ENCODE measurements at regions of chr19 and their contacts with region 1.

Region 1: DNA sequence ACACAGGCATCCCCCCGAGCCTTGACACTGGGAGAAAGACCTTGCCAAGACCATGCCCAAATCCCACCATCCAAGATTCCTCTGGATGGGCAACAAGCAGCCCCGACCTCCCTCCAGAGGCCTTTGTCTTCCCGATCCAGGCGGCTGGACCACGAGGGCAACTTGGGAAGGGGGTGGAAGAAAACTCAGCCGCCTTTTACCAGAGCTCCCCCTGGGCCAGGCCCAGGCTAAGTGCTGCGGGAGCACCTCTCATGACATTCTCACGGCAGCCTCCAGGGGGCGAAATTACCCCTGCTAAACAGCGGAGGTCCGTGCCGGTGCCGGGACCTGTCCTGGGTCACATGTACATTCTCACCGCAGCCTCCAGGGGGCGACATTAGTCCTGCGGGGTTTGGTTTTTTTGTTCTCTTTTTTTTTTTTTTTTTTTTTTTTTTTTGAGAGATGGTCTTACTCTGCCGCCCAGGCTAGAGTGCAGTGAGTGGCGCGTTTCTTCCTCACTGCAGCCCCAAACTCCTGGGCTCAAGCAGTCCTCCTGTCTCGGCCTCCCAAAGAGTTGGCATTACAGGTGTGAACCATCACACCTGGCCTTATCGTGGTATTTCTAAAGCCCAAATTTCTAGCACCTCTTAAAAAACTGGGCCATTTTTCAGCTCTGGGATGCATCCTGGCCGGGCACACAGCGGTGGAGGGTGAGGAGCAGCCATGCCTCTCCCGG is 2.1 kb upstream of the RSPH6A start:
- DNase-seq: peak; percentile 99
- CTCF ChIP-seq: peak; percentile 96

Region 2: DNA sequence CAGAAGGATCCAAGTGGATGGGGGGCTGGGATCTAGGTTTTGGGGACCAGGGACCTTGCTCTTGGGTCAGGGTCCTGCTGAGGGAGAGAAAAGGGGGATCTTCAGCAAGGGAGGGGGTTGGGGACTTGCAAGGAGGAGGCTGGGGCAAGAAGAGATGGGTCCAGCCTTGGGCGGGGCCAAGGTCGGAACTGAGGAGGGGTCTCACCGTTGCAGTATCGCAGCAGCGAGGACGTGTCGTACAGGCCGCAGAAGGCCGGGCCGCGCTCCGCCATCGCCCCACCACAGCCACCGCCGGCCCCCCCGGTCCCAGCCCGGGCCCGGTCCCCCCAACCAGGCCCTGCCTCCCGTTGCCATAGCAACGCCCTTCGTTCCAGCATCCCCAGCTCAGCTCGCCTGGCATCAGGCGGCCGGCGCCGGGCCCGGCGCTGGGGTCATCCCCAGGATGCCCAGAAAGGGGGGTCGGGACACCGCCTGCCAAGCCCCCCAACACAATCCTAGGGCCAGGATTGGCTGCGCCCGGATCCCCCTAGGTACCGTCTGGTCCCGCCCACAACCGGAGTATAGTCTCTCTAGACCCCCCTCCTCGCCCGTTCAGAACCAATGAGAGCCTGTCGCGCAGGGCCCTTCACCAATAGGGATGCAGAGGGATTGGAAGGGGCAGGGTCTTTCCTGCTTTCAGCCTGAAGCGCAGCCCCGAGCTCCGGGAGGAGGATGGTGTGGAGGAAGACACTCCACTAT is 171.9 kb before region 1 on chr19:
- CTCF ChIA-PET with region 1: no interaction called
- POLR2A ChIA-PET with region 1: no interaction called
- DNase-seq: peak; percentile 93
- CTCF ChIP-seq: no peak

Region 3: DNA sequence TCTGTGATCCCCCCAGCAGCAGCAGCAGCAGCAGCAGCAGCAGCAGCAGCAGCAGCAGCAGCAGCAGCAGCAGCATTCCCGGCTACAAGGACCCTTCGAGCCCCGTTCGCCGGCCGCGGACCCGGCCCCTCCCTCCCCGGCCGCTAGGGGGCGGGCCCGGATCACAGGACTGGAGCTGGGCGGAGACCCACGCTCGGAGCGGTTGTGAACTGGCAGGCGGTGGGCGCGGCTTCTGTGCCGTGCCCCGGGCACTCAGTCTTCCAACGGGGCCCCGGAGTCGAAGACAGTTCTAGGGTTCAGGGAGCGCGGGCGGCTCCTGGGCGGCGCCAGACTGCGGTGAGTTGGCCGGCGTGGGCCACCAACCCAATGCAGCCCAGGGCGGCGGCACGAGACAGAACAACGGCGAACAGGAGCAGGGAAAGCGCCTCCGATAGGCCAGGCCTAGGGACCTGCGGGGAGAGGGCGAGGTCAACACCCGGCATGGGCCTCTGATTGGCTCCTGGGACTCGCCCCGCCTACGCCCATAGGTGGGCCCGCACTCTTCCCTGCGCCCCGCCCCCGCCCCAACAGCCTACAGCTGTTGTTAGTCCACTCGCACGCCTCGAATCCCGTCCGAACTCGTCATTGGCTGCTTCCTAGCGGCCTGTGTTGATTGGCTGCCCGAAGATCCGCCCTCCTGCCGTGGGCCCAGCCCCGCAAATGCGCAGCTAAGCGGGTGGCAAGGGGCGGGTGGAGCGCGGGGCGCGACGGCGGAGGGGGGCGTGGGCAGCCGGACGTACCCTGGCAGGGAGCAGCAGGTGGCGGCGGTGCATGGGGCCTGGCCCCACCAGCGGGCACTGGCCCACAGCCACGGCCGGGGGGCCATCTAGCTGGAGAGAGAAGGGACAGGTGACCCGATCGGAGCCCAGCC is 46.7 kb before region 1 on chr19:
- CTCF ChIA-PET with region 1: interaction called, 17 read pairs
- POLR2A ChIA-PET with region 1: no interaction called
- DNase-seq: peak; percentile 88
- CTCF ChIP-seq: peak; percentile 94

Region 4: DNA sequence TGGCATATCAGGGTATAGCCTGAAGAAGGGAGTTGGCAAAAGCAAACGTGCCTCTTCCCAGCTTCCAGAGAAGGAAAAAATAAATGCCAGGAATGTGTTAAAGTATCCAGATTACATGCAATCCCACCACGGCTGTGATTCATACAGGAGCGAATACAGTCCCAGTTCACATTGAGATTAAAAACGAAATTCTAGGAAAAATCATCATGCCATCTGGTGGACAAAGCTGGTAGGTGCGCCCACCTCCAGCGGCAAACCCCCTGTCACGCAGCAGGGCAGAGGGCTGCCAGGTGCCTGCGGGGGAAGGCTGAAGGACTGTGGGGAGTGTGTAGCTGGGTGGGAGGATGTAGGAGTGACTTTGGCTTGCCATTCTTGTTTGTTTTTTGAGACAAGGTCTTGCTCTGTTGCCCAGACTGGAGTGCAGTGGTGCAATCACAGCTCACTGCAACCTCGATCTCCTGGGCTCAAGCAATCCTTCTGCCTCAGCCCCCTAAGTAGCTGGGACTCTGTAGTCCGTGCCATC is 18.1 kb before region 1 on chr19:
- CTCF ChIA-PET with region 1: interaction called, 113 read pairs
- POLR2A ChIA-PET with region 1: interaction called, 3 read pairs
- DNase-seq: peak; percentile 81
- CTCF ChIP-seq: peak; percentile 72

Region 5: DNA sequence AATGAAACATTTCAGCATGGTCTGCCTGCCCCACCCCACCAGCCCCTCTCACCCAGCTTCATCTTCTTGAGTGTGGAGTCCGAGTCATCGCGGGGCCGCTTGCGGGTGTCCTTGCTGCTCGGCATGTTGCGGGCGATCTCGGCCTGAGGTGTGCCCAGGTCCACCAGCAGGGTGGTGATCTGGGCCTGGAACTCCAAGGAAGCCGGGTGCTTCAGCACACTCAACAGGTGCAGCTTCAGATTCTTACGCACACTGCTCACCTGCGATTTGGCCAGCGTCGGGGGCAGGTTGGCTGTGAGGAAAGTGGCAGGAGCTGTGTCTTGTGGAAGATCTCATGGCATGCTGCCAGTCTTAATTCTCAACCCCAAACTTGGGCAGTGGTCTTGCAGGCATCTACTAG is 25.0 kb after region 1 on chr19:
- CTCF ChIA-PET with region 1: interaction called, 24 read pairs
- POLR2A ChIA-PET with region 1: no interaction called
- DNase-seq: no peak
- CTCF ChIP-seq: no peak

Region 6: GRCh38 chr19:45862564-45863334 is 45.6 kb after region 1 on chr19 and contains the start of gene SYMPK:
- CTCF ChIA-PET with region 1: interaction called, 16 read pairs
- POLR2A ChIA-PET with region 1: no interaction called
- DNase-seq: peak; percentile 100
- CTCF ChIP-seq: no peak

Region 7: DNA sequence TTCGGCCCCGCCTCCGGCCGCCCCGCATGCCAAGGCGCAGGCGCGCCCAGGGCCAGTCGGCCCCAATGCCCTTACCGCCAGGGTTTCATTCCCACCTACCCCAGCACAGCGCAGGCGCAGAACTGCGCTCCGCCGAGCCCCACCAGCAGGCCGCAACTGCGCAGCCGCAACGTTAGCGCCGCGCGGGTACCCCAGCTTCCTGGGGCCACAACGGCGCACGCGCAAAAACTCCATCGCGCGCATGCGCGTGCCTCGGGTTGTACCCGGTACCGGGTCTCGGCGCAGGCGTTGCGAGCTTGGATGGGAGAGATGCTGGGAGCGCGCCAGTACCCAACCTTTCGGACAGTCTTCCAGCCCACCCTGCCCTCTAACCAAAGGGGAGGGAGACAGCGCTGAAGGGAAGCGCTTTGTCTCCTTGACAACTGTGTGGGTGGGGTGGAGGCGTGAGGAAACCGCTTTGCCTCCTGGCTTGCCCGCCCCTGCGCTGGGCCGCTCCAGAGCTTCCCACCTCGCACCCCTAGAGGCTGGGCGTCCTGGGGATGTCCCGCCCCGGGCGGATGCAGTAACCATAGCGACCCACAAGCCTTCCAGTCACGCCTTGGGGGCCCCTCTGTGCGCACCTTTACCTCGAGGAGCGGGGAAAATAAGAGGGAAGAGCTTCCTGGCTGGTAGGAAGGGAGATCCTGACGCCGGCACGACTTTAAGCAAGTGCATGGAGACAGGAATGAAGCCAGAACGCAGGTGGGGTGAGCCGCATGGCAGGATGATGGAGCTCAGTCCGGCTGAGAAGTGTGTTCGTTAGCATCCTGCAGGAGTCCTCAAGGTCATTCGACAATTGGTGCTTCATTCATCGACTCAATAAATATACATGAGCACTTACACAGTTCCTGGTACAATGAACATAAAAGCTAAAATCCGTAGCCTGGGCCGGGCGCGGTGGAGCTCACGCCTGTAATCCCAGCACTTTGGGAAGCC is 85.8 kb after region 1 on chr19:
- CTCF ChIA-PET with region 1: interaction called, 14 read pairs
- POLR2A ChIA-PET with region 1: no interaction called
- DNase-seq: peak; percentile 100
- CTCF ChIP-seq: no peak

Region 8: GRCh38 chr19:46181388-46181779 is 364.2 kb after region 1 on chr19:
- CTCF ChIA-PET with region 1: no interaction called
- POLR2A ChIA-PET with region 1: no interaction called
- DNase-seq: no peak
- CTCF ChIP-seq: no peak

Measured in GM10248 (cell line).